T-cell (primary cell): ENCODE measurements at regions of chr1 and their contacts with region 1.

Region 1: DNA sequence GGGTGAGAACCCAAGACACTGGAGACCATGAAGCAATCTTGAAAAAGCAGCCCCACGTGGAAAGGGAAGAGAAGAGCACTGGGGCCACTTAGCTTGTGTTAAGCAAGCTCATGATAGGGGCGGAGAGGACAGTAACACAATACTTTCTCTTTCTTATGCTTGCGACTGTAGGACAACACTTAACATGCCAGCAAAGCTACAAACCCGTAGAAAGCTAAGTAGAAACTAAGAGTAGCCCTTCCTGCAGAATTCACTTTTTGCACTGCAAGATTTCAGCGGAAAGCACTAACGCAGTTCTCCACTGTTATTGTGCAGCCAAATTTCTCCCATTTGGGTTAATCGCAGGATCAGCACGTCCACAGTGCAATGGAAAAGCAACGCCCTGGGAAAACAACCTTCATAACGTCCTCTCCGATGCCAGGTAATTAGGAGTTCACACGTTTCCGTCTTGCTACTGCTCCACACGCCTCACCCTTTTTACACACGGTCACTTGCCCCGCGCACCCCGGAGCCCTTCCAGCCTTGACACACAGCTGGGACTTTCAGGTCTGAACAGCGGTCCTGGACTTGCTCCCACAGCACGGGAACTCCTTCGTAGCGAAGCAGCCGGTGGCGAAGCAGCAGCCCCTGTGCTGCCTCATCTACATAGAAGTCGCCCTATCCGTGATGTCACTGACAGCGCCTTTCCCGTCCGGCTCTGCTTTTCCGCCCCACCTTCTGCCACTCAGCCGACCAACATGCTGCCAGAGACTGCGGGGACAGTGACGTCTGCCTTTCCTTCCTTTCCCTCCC is 148.6 kb downstream of the PPIAL4G start:
- DNase-seq: peak; percentile 42 to 81 (median 60)
- ATAC-seq: peak; percentile 76 to 82 (median 80)
- H3K4me3 ChIP-seq: peak overlapping the region; percentile 72 to 77
- H3K4me3 Mint-ChIP-seq: peak overlapping the region; percentile 95 to 98 (median 96)
- H3K27ac ChIP-seq: peak overlapping the region; percentile 87
- H3K27ac Mint-ChIP-seq: peak overlapping the region; percentile 99 to 100
- H3K4me1 ChIP-seq: peaks cover 11 to 21% of the 10 kb centered on the region in 2 experiments
- H3K4me1 Mint-ChIP-seq: peaks cover 34 to 39% (median 35%) of the 10 kb centered on the region in 3 donors
- H3K27me3 ChIP-seq: peaks cover 0 to 11% of the 10 kb centered on the region in 2 experiments
- H3K27me3 Mint-ChIP-seq: peaks cover 7 to 14% of the 10 kb centered on the region in 2 donors

Region 2: DNA sequence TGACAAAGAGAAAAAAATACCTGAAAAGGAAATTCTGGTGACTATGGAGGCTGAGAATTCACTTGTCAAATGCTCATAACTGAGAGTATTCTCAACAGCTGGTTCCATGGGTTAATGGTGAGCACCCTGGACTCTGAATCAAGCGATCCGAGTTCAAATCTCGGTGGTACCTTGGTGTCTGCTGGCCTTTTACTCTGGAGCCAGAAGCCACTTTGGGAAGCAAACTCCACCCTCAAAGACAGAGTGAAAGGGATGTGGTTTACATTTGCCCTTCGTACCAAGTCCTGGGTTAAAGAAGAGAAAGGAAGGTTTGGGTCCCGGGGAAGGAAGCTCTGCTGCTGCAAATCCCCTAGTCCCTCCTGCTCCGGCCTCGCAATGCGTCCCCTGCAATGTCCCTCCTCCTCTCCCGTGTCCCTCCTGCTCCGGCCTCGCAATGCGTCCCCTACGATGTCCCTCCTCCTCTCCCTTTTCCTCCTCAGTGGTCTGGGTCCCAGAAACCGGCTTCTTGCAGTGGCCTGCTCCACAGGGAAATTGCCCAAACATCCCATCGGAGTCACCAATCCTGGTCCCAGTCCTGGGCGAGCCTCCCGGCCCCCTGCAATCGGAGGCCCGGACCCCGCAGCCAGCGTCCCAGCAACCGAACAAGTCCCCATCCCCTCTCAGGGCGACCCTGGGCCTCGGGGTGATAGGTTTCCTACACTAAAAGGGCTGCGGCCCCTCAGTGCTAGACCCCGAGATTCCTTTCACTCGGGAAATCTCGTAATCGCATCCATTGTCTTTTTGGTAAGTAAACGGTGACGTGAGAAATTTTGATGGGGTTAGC is 19.1 kb after region 1 on chr1:
- CTCF ChIA-PET with region 1: interaction called in 1 of 2 experiments, 6 read pairs
- POLR2A ChIA-PET with region 1: interaction called in 1 of 2 experiments, 12 read pairs
- DNase-seq: peak in 1 of 35 experiments; percentile 29
- ATAC-seq: peak in 2 of 4 experiments; percentile 20 to 77
- H3K4me3 ChIP-seq: no peak overlapping the region
- H3K4me3 Mint-ChIP-seq: peak overlapping the region in 1 of 3 donors; percentile 53
- H3K27ac ChIP-seq: no peak overlapping the region
- H3K27ac Mint-ChIP-seq: no peak overlapping the region
- H3K4me1 ChIP-seq: peaks cover 0 to 13% of the 10 kb centered on the region in 2 experiments
- H3K4me1 Mint-ChIP-seq: peaks cover 5 to 13% (median 7%) of the 10 kb centered on the region in 3 donors
- H3K27me3 ChIP-seq: peaks cover 4 to 38% of the 10 kb centered on the region in 2 experiments
- H3K27me3 Mint-ChIP-seq: peaks cover 27 to 66% of the 10 kb centered on the region in 2 donors